ENCODE measurements at regions of chr11 and their contacts with region 1.

Region 1: GRCh38 chr11:70647188-70648166 is 249.1 kb downstream of the CTTN start:
- DNase-seq: no peak
- H3K4me3 ChIP-seq: no peak overlapping the region
- CTCF ChIP-seq: no peak

Region 2: DNA sequence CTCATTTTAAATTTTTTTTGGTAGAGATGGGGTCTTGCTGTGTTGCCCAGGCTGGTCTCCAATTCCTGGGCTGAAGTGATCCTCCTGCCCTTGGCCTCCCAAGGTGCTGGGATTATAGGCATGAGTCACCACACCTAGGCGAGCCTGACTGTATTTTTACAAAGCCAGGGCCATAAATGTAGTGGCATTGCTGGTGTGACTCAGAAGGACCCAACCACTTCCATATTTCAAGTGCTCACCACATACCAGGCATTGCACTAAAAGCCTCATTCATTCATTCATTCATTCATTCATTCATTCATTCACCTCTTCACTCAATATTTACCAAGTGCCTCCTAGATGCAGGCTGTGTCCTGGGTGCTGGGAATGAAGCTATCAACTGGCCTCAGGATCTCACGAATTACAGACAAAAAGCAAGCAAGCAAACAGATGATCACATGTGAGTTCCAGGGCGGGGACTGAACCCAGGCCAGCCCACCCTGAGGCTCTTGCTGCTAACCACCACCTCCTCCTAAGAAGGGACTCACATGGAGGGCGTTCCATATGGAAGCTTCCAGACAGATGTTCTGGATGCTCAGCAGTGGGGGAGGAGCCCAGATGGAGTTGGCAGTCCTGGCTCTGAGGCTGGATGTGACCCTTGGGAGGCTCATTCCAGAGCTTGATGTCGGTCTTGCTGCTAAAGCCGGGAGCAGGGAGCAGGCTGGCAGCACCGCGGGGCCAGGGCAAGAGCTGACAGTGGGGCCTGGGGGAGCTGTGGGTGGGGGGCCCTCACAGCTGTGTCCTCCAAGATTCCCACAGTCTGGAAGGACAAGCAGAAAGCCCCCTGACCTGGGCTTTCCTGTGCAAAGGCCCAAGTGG is 90.4 kb before region 1 on chr11:
- in situ Hi-C with region 1: loop called (anchors 5 kb)
- DNase-seq: no peak
- H3K4me3 ChIP-seq: no peak overlapping the region
- CTCF ChIP-seq: no peak

Region 3: DNA sequence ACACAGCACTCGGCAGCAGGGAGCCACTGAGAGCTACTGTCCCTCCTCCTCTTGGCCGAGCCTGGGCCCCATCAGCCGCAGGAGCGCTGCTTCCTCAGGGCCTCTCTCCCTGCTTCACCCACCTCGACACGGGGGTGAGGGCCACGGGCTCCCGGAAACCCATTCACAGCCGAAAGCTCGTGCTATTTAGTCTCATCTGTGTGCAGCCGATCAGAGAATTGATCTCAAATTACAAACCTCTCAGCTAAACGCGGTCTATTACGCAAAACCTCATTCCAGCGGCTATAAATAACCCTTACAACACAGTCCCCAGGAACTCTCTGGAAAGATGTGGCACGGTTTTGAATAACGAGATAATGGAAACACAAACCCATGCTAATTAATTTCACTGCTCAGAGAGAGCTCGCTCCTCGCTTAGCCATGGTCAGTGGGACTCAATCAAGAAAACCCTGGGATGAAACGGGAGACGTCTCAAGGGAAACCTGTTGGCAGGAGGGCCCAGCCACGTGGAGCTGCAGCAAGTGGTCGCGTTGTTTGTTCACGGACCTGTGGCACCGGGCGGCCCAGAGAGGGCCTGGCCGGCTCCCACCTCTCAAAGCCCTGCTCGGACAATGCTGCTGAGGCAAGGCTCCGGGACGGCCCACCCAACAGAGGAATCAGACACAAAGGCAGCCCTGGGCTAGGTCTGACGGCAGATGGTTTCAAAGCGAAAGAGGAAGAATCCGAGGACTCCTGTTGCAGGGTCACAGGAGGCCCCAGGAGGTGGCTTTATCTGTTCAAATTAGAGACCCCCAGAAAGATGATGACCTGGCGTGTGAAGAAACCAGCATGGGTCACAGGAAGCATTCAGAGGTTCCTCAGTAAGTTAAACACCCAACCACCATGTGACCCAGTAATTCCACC is 38.7 kb before region 1 on chr11:
- in situ Hi-C with region 1: no loop called
- DNase-seq: peak; percentile 46
- H3K4me3 ChIP-seq: no peak overlapping the region
- CTCF ChIP-seq: no peak

Region 4: DNA sequence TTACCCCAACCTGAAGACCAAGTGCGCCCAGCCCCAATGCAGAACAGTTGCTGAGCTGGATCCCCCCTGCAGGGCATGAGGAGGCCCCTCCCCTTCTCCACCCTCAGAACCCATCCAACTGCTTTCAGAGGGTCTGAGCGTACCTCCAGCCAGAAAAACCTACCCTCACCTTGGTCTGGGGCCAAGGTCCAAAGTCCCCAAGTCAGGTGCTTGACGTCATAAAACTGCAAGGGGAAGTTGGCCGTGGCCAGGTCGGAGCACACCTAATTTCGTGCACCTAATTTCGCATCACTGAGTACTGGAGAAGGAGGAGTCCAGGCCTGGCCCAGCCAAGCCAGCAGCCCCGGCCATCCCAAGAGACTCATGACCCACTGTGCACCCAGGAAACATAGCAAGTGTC is 40.7 kb after region 1 on chr11:
- in situ Hi-C with region 1: loop called (anchors 5 kb)
- DNase-seq: no peak
- H3K4me3 ChIP-seq: no peak overlapping the region
- CTCF ChIP-seq: no peak

Region 5: DNA sequence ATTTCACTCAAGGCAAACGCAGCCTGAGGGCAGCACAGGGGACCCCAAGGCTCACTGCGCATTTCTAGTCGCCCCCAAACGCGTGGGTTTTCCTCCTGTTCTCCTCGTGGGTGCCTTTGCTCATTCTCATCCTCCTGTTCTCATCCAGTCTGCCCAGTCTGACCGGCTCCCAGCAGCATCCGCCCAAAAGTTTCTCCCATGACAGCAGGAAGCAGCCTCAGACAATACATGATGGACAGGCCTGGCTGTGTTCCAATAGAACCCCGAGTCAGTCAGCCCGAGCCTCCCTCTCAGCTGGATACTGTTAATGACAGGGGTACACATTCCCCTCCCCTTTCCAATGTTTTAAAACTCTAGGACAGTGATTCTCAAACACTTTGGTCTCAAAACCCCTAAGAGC is 857.1 kb after region 1 on chr11:
- in situ Hi-C with region 1: no loop called
- DNase-seq: no peak
- H3K4me3 ChIP-seq: no peak overlapping the region
- CTCF ChIP-seq: no peak